Activated B cell treated with CpG ODN at 0.5 μM for 24 hours (primary cell): ENCODE measurements at regions of chr6 and their contacts with region 1.

Region 1: DNA sequence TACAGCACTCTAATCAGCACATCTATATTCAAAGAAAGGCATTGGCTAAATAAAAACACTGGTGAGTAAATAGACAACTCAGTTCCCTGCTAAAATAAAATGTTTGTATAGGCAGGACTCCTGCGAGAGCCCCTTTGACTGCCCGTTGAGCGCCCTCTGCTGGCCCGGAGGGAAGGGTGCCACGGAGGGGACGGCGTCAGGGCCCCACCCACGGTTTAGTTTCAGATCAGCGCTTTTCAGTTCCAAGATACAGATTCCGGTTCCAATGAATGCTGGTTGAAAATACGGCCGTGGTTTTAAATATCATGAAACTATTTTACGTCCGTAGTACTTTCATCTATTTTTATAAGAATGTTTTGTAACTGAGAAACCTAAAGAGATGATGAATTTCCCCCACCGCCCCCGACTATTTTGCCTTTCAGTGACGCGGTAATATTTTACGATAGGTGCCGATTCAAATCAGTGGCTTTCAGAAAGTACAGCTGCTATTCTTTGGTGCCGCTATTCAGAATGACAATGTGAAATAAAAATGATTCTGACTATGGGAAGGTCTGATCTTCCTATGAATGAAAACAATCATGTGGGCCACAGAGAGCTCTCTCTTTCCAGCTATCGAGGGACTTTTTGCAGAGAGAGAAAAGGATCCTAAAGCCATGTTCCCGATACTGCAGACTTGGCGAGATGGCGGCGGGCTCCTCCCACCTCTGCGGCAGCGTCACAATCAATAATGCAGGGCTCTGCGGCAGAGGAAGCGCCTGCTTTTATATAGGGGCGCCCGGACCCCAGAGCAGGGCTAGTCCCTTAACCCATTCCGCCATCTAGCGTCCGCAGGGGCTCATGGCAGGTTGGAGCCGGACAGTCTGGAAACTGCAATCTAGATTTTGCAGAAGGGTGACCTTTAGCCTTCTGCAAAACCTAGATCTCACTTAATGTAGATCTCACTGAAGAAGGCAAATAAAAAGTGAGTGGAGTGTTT is 10.6 kb upstream of the CCN6 start:
- DNase-seq: peak; percentile 78
- ATAC-seq: peak; percentile 94
- H3K4me3 Mint-ChIP-seq: peak overlapping the region; percentile 91
- H3K27ac Mint-ChIP-seq: peak overlapping the region; percentile 96
- H3K4me1 Mint-ChIP-seq: peaks cover 9% of the 10 kb centered on the region
- H3K27me3 Mint-ChIP-seq: no peaks in the 10 kb centered on the region
- CTCF ChIP-seq: peak; percentile 62

Region 2: GRCh38 chr6:110958329-110959192 is 1084.8 kb before region 1 on chr6 and contains the start of gene GTF3C6:
- CTCF ChIA-PET with region 1: no interaction called
- POLR2A ChIA-PET with region 1: interaction called, 4 read pairs
- intact Hi-C with region 1: loop called (anchors 1 kb)
- DNase-seq: peak; percentile 87
- ATAC-seq: peak; percentile 98
- H3K4me3 Mint-ChIP-seq: peak within 1 kb of the TSS; percentile 97
- H3K27ac Mint-ChIP-seq: peak within 1 kb of the TSS; percentile 98
- H3K4me1 Mint-ChIP-seq: peaks cover 19% of the 10 kb centered on the region
- H3K27me3 Mint-ChIP-seq: no peaks in the 10 kb centered on the region
- CTCF ChIP-seq: no peak
- total RNA-seq, gene GTF3C6: 76.7 and 93.3 TPM in 2 replicates

Region 3: DNA sequence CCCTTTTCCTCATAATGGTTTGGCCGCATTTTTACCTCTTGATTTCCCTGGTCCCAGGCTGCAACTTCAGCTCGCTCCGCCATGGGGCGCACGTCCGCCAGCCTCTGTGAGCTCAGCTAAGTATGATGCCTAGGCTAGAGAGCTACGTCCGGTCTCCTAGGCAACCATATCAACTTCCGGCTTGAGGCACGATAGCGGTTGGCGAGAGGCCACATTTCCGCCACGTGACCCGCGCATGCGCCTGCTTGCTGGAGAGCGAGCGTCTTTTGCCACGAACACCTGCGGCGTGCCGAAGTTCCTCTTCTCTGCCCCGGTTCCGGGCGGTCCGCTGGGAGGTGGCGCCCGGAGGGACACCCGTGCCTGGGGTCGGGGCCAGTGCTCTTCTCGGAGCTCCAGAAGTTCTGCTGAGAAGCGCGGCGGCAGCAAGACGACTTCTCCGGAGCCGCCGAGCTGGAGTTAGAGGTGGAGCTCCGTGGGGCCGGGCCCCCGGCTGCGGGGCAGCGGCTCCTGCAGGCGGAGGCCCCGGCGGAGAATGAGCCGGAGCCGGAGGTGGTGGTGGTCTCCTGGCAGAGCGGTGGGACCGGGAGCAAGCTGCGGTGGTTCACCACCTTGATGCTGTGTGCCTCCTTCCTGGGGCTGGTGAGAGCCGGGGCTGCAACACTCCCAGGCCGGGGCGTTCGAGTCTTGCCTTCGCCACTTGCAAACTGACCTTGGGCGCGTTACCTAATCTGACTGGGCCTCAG is 784.1 kb before region 1 on chr6:
- CTCF ChIA-PET with region 1: interaction called, 3 read pairs
- POLR2A ChIA-PET with region 1: interaction called, 12 read pairs
- intact Hi-C with region 1: loop called (anchors 1 kb)
- DNase-seq: peak; percentile 97
- ATAC-seq: peak; percentile 93
- H3K4me3 Mint-ChIP-seq: peak overlapping the region; percentile 84
- H3K27ac Mint-ChIP-seq: peak overlapping the region; percentile 87
- H3K4me1 Mint-ChIP-seq: peaks cover 30% of the 10 kb centered on the region
- H3K27me3 Mint-ChIP-seq: no peaks in the 10 kb centered on the region
- CTCF ChIP-seq: peak; percentile 89

Region 4: GRCh38 chr6:111709615-111710398 is 333.5 kb before region 1 on chr6:
- CTCF ChIA-PET with region 1: interaction called, 85 read pairs
- POLR2A ChIA-PET with region 1: no interaction called
- intact Hi-C with region 1: loop called (anchors 1 kb)
- DNase-seq: no peak
- ATAC-seq: peak; percentile 97
- H3K4me3 Mint-ChIP-seq: peak overlapping the region; percentile 19
- H3K27ac Mint-ChIP-seq: no peak overlapping the region
- H3K4me1 Mint-ChIP-seq: peaks cover 4% of the 10 kb centered on the region
- H3K27me3 Mint-ChIP-seq: no peaks in the 10 kb centered on the region
- CTCF ChIP-seq: peak; percentile 44

Region 5: GRCh38 chr6:111873178-111874024 is 169.9 kb before region 1 on chr6 and contains the start of gene FYN:
- CTCF ChIA-PET with region 1: interaction called, 3 read pairs
- POLR2A ChIA-PET with region 1: no interaction called
- intact Hi-C with region 1: loop called (anchors 1 kb)
- DNase-seq: peak; percentile 97
- ATAC-seq: peak; percentile 94
- H3K4me3 Mint-ChIP-seq: peak within 1 kb of the TSS; percentile 93
- H3K27ac Mint-ChIP-seq: peak within 1 kb of the TSS; percentile 90
- H3K4me1 Mint-ChIP-seq: peaks cover 44% of the 10 kb centered on the region
- H3K27me3 Mint-ChIP-seq: no peaks in the 10 kb centered on the region
- CTCF ChIP-seq: no peak
- total RNA-seq, gene FYN: 57.8 and 64.7 TPM in 2 replicates

Region 6: GRCh38 chr6:112087136-112087911 is 44.0 kb after region 1 on chr6 and contains the starts of genes FAM229B and TUBE1:
- CTCF ChIA-PET with region 1: interaction called, 5 read pairs
- POLR2A ChIA-PET with region 1: interaction called, 7 read pairs
- intact Hi-C with region 1: loop called (anchors 1 kb)
- DNase-seq: peak; percentile 74
- ATAC-seq: peak; percentile 96
- H3K4me3 Mint-ChIP-seq: no peak within 1 kb of the TSS
- H3K27ac Mint-ChIP-seq: no peak within 1 kb of the TSS
- H3K4me1 Mint-ChIP-seq: no peaks in the 10 kb centered on the region
- H3K27me3 Mint-ChIP-seq: peaks cover 14% of the 10 kb centered on the region
- CTCF ChIP-seq: no peak
- total RNA-seq, gene FAM229B: 2.0 and 2.6 TPM in 2 replicates
- total RNA-seq, gene TUBE1: 24.1 and 28.0 TPM in 2 replicates

Region 7: DNA sequence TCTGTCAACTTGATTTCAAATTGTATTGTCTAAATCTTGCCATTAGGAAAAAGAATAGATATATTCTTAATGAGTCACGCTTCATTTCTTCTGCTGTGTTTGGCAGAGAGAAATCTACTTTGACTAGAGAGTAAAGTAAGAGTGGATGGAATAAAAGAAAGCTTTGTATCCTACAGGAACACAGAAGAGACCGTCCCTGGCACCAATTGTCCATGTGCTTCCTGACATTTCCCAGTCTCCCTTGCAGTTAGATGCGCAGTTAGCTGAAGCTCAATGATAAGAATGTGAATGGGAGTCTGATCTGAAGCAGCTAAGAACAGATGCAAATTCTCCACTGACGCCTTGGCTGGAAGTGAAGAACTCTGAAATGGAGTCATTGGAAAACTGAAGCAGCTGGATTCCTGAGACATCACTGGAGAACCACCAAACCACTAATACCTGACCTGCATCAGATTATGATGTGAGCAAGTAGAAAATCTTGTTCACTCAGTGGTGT is 1285.6 kb after region 1 on chr6:
- CTCF ChIA-PET with region 1: no interaction called
- POLR2A ChIA-PET with region 1: no interaction called
- intact Hi-C with region 1: no loop called
- DNase-seq: no peak
- ATAC-seq: no peak
- H3K4me3 Mint-ChIP-seq: no peak overlapping the region
- H3K27ac Mint-ChIP-seq: no peak overlapping the region
- H3K4me1 Mint-ChIP-seq: no peaks in the 10 kb centered on the region
- H3K27me3 Mint-ChIP-seq: no peaks in the 10 kb centered on the region
- CTCF ChIP-seq: no peak